Activated B cell treated with CpG ODN at 0.5 μM for 24 hours (primary cell): ENCODE measurements at regions of chr17 and their contacts with region 1.

Region 1: DNA sequence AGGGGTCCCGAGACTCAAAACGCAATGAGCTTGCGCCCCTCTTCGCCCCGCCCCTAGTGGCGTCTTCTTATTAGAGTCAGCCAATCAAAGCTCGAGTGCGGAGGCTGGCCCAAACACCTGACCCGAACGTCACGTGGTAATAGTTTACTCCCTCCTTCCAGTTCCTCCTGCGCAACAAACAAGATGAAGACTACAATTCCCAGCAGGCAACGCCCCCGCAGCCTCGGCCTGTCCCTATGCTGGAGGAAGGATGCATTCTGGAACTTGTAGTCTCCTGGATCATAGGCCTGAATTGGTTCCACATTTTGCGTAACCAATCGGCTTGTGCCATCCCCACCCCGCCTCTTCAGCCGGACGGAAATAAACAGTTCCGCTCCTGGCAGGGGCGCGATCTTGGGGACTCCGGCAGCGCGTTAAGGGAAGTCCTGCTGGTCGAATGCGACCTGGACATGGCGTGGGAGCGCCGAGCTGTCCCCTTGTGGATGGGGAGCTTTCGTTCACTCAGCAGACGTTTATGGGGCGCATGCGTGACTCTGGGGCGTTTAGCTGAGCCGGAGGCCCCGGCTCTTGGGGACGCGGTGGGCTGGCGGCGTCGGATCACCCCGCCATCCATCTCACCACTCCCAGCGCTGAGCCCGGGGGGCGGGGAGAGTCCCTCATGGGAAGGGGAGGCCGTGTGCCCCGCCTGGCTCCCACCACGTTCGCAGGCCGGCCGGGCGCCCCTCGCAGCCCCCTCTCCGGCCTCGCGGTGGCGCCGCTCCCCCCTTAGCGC is at the start of gene WBP2:
- DNase-seq: peak; percentile 84
- ATAC-seq: peak; percentile 87
- H3K4me3 Mint-ChIP-seq: no peak within 1 kb of the TSS
- H3K27ac Mint-ChIP-seq: peak within 1 kb of the TSS; percentile 79
- H3K4me1 Mint-ChIP-seq: peaks cover 48% of the 10 kb centered on the region
- H3K27me3 Mint-ChIP-seq: no peaks in the 10 kb centered on the region
- CTCF ChIP-seq: no peak
- total RNA-seq, gene WBP2: 66.0 and 68.7 TPM in 2 replicates

Region 2: GRCh38 chr17:75182569-75183450 is 672.7 kb before region 1 on chr17 and contains the start of gene SUMO2:
- CTCF ChIA-PET with region 1: no interaction called
- POLR2A ChIA-PET with region 1: no interaction called
- intact Hi-C with region 1: loop called (anchors 5 kb)
- DNase-seq: peak; percentile 96
- ATAC-seq: peak; percentile 82
- H3K4me3 Mint-ChIP-seq: peak within 1 kb of the TSS; percentile 86
- H3K27ac Mint-ChIP-seq: peak within 1 kb of the TSS; percentile 97
- H3K4me1 Mint-ChIP-seq: peaks cover 38% of the 10 kb centered on the region
- H3K27me3 Mint-ChIP-seq: no peaks in the 10 kb centered on the region
- CTCF ChIP-seq: no peak
- total RNA-seq, gene SUMO2: 365 and 394 TPM in 2 replicates

Region 3: DNA sequence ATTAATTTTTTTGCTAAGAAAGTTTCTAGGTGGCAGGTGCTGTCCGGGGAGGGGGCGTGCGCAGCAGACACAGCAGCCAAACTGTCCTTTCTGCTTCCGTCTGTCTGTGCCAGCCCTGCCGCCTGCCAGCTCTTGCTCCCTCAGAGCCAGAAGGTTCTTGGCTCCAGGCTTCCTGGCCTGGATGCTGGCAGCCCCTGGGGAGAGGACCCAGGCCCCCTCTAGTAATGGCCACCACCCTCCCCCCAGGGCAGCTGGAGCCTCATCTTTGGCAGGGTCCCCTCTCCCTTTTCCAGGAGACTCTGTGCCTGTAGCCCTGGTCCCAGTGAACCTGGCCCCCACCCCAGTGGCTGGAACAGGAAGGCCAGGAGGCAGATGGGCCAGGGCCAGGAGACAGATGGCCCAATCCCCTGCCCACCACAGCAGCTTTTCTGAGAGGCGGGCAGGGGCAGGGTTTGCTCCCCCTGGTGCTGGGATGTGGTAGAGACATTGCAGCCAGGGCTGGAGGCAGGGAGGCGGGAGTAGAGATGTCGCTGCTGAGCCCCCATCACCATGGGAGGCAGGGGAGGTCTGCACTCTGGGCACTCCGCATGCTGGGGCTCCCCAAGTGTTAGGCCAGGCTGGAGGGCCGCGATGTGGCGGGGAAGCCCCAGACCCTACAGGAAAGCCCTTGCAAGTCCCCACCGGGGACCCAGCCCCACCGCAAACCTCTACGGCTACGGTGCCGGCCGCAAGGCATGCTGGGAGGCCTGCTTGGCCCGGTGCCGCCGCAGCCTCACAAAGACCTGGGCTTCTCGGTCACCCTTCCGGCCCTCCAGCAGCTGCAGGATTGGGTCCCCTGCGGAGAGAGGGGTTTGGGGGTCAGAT is 28.0 kb before region 1 on chr17:
- CTCF ChIA-PET with region 1: interaction called, 3 read pairs
- POLR2A ChIA-PET with region 1: interaction called, 20 read pairs
- intact Hi-C with region 1: no loop called
- DNase-seq: peak; percentile 64
- ATAC-seq: peak; percentile 85
- H3K4me3 Mint-ChIP-seq: peak overlapping the region; percentile 64
- H3K27ac Mint-ChIP-seq: peak overlapping the region; percentile 79
- H3K4me1 Mint-ChIP-seq: peaks cover 16% of the 10 kb centered on the region
- H3K27me3 Mint-ChIP-seq: no peaks in the 10 kb centered on the region
- CTCF ChIP-seq: no peak

Region 4: DNA sequence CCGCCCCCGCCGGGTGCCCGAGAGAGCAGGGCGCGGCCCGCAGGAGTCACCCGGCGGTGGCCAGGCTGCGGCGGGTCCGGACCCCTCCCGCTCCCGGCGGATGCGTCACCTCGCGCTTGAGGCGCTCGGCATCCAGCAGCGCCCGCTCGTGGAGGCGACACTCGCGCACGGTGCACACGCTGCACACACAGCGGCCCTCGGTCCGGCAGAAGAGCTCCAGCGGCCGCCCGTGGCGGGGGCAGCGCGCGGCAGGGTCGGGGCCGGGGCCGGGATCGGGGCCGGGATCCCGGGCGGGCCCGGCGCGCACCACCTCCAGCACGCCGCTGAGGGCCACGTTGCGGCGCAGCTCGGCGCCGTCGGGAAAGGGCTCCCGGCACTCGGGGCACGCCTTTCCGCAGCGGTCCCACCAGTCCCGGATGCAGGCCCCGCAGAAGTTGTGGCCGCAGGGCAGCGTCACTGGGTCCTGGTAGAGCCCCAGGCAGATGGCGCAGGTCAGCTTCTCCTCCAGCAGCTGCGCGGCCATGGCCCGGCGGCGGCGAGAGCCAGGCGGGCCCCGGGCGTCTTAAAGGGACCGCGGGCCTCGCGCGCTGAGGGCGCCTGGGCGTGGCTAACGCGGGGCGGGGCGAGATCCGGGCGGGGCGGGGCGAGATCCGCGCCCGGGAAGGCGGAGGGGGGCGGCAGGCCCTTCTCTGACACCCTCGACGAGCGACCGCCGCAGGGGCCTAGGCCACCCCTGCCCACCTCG is 41.1 kb after region 1 on chr17 and contains the start of gene TRIM65:
- CTCF ChIA-PET with region 1: interaction called, 12 read pairs
- POLR2A ChIA-PET with region 1: interaction called, 53 read pairs
- intact Hi-C with region 1: loop called (anchors 1 kb)
- DNase-seq: peak; percentile 86
- ATAC-seq: peak; percentile 85
- H3K4me3 Mint-ChIP-seq: peak within 1 kb of the TSS; percentile 82
- H3K27ac Mint-ChIP-seq: peak within 1 kb of the TSS; percentile 73
- H3K4me1 Mint-ChIP-seq: peaks cover 27% of the 10 kb centered on the region
- H3K27me3 Mint-ChIP-seq: no peaks in the 10 kb centered on the region
- CTCF ChIP-seq: no peak
- total RNA-seq, gene TRIM65: 20.0 and 22.4 TPM in 2 replicates

Region 5: DNA sequence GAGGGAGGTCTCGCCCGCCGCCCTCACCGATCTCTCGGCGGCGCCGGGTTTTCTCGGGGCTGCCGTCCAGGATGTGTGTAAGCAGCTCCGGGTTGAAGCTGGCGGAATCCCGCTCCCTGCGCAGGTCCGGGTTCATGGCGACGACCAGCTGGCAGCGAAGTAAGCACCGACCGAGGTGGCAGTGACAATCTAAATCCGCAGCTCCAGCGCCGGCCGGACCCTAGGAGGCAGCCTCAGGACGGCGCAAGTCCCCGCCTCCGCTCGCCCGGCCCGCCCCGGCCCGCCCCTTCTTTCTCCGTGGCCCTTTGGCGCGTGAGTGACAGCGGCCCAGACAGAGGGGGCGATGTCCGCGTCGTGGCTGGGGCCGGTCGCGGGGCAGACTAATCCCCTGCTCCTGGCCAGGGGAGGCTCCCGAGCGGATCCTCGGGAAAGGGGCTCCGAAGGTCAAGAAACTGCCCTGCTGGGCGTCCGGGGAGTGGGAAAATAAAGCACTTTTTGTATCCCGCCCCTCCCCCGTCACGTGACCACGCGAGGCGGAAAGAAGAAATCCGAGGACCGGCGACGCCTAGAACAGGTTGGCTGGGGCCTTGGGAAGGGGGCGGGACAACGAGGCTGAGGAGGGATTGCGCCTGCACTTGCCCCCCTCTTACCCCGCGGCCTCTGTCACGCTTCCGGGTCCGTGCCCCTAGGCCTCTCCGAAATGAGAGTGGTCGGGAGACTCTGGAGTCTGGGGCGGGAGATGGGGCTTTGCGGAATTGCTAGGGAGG is 123.6 kb after region 1 on chr17 and contains the starts of genes ACOX1 and TEN1:
- CTCF ChIA-PET with region 1: no interaction called
- POLR2A ChIA-PET with region 1: interaction called, 5 read pairs
- intact Hi-C with region 1: loop called (anchors 2 kb)
- DNase-seq: peak; percentile 91
- ATAC-seq: peak; percentile 94
- H3K4me3 Mint-ChIP-seq: peak within 1 kb of the TSS; percentile 100
- H3K27ac Mint-ChIP-seq: peak within 1 kb of the TSS; percentile 100
- H3K4me1 Mint-ChIP-seq: peaks cover 37% of the 10 kb centered on the region
- H3K27me3 Mint-ChIP-seq: no peaks in the 10 kb centered on the region
- CTCF ChIP-seq: no peak
- total RNA-seq, gene ACOX1: 23.3 and 25.8 TPM in 2 replicates
- total RNA-seq, gene TEN1: 22.7 and 23.2 TPM in 2 replicates

Region 6: GRCh38 chr17:76353599-76354316 is 498.3 kb after region 1 on chr17 and contains the start of gene PRPSAP1:
- CTCF ChIA-PET with region 1: no interaction called
- POLR2A ChIA-PET with region 1: no interaction called
- intact Hi-C with region 1: loop called (anchors 5 kb)
- DNase-seq: peak; percentile 83
- ATAC-seq: peak; percentile 93
- H3K4me3 Mint-ChIP-seq: peak within 1 kb of the TSS; percentile 94
- H3K27ac Mint-ChIP-seq: peak within 1 kb of the TSS; percentile 98
- H3K4me1 Mint-ChIP-seq: peaks cover 23% of the 10 kb centered on the region
- H3K27me3 Mint-ChIP-seq: no peaks in the 10 kb centered on the region
- CTCF ChIP-seq: no peak
- total RNA-seq, gene PRPSAP1: 26.7 and 27.1 TPM in 2 replicates